GM13977 (cell line): ENCODE measurements at regions of chr20 and their contacts with region 1.

Region 1: DNA sequence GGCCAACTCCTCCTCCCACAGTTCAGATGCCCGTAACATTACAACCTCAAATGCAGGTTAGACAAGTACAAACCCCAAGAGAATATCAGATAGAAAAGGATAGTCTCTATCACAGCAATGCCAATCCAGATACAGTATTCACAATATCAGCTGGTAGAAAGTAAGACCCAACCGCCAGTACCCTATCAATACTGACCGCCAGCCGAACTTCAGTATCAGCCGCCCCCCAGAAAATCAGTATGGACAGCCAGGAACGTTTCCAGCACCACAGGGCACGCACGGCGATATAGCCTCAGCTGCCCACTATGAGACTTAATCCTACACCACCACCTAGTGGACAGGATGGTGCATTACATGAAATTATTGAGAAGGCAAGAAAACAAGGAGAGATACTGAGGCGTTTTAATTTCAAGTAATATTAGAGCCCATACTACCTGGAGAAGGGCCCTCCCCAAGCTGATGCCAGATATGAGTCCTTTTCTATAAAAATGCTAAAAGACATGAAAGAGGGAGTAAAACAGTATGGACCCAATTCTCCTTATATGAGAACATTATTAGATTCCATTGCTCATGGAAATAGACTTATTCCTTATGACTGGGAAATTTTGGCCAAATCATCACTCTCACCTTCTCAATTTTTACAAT is 17.6 kb upstream of the EIF2S2 start:
- DNase-seq: peak; percentile 82
- CTCF ChIP-seq: peak; percentile 80

Region 2: DNA sequence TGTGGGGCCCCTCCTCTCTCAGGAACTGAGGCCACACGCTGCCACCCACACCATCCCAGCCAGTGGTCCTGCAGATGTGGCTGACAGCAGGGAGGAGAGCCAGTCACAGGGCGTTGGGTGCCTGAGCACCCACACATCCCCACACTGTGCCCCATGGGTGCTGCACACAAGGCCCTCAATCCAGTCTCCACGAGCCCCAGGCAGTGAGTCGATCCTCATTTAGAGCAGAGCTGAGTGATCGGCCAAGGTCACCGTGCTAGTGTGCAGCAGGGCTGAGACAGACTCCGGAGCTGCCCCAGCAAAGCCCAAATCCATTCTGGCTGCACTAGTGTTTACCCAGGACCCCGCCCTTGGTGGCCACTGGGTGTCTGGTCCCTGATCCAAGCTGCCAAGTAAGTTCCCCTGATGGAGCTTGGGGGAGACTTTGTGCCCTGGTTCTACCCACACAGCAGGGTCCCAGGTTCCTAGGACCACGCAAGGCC is 1464.9 kb before region 1 on chr20:
- in situ Hi-C with region 1: no loop called
- DNase-seq: no peak
- CTCF ChIP-seq: no peak

Region 3: DNA sequence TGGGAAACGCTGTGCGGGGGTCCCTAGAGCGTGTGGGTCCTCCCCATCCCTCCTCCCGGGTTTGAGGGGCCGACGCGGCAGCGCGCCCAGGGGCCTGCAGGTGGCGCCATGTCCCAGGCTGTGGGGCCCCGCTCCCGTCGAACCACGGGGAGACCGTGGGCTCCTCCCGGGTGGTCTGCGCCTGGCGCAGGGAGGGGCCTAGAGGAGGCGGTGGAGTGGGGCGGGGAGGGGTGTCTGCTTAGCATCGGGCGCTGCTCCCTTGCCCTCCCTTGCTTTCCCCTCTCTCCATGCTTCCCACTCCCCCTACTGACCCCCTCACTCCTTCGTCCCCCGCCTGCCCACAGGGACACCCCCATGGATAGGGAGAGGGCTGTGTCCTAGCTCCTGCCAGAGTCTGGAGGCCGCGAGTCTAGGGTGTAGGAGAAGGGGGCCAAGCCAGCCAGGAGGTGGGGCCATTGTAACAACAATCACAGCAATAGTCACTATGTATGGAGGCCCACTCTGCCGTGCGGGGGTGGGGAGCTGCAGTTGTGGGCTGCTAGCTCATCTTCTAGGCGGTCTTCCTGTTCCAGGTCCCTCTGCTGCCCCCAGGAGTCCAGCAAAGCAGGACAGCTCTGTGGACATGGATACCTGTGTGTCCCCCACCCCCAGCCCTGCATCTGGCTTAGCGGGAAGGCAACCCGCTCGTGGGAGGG is 266.8 kb before region 1 on chr20:
- in situ Hi-C with region 1: loop called (anchors 10 kb)
- DNase-seq: peak; percentile 90
- CTCF ChIP-seq: peak; percentile 93

Region 4: DNA sequence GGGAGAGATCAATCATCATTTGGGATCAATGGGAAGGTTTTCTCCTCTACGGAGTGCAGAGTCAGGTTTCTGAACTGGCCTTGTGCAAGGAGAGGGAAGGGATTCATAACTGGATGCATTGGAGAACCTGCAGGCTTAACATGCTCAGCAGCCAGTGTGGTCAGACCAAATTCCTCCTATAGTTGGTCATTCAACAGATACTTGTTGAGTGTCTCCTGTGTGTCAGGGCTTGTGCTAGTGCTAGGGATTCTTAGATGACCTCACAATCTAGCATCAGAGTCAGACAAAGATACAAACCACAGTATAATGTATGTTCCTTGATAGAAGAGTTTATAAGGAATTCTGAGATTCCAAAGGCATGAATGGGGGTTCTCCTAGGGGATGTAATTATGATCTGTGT is 112.0 kb before region 1 on chr20:
- in situ Hi-C with region 1: no loop called
- DNase-seq: no peak
- CTCF ChIP-seq: no peak

Region 5: GRCh38 chr20:34522969-34523871 is 393.6 kb after region 1 on chr20:
- in situ Hi-C with region 1: no loop called
- DNase-seq: peak; percentile 63
- CTCF ChIP-seq: peak; percentile 76